GM12878 (cell line): ENCODE measurements at regions of chr7 and their contacts with region 1.

Region 1: DNA sequence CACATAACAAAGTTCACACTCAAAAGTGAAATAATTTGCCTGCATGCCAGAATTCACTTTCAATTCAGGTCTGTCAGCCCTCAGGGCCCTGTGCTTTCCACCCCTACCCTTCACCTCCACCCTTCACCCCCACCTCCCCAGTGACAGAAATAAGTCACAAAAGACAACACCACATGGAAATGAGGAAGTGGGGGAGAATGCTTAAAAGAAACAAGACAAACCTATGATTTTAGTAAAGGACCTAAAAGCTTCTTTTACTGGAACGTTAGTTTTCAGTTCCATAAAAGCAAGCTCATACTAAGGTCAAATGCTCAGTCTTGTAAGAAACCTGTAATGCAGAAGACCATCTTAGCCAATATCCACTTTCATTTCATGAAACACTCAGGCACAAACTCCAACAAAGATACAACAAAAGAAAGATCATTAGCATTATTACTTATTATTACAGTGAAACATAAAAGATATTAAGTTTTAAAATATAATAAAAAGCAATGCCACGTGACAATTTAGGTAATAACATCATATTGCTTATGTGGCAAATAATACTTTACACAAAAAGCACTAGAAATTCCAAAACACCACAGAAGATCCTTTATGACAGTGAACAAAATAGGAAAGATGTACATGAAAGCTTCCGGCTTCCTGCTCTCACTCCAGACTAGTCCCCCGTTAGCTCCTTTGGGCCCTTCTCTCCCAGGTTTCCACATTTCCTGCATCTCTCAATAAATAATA is 112.1 kb downstream of the LMBR1 start:
- DNase-seq: peak; percentile 86
- ATAC-seq: peak; percentile 96
- H3K4me3 ChIP-seq: 0 out of 2 replicates have a peak overlapping the region, but pooled peaks have one; percentile 16
- H3K27ac ChIP-seq: peak overlapping the region; percentile 85
- H3K4me1 ChIP-seq: peaks cover 33% of the 10 kb centered on the region
- H3K27me3 ChIP-seq: no peaks in the 10 kb centered on the region
- CTCF ChIP-seq: no peak
- EP300 ChIP-seq: peak; percentile 80; a peak in 2 of 4 replicates
- POLR2A ChIP-seq: no peak
- RAD21 ChIP-seq: peak; percentile 34; the same call in 1 of the 2 replicates

Region 2: GRCh38 chr7:156460858-156461627 is 319.8 kb before region 1 on chr7:
- CTCF ChIA-PET with region 1: no interaction called
- POLR2A ChIA-PET with region 1: no interaction called
- RAD21 ChIA-PET with region 1: no interaction called
- SMC1A ChIA-PET with region 1: no interaction called
- in situ Hi-C with region 1: no loop called
- intact Hi-C with region 1: no loop called
- DNase-seq: no peak
- ATAC-seq: no peak
- H3K4me3 ChIP-seq: no peak overlapping the region
- H3K27ac ChIP-seq: no peak overlapping the region
- H3K4me1 ChIP-seq: no peaks in the 10 kb centered on the region
- H3K27me3 ChIP-seq: no peaks in the 10 kb centered on the region; a peak in 2 of 4 replicates
- CTCF ChIP-seq: no peak
- EP300 ChIP-seq: no peak
- POLR2A ChIP-seq: no peak
- RAD21 ChIP-seq: no peak

Region 3: GRCh38 chr7:156747691-156748090 is 33.2 kb before region 1 on chr7:
- CTCF ChIA-PET with region 1: interaction called, 6 read pairs
- POLR2A ChIA-PET with region 1: interaction called, 3 read pairs
- RAD21 ChIA-PET with region 1: interaction called, 15 read pairs
- SMC1A ChIA-PET with region 1: interaction called, 29 read pairs
- in situ Hi-C with region 1: no loop called
- intact Hi-C with region 1: no loop called
- DNase-seq: no peak
- ATAC-seq: no peak
- H3K4me3 ChIP-seq: no peak overlapping the region
- H3K27ac ChIP-seq: no peak overlapping the region
- H3K4me1 ChIP-seq: no peaks in the 10 kb centered on the region; the same call in 1 of the 2 replicates
- H3K27me3 ChIP-seq: no peaks in the 10 kb centered on the region
- CTCF ChIP-seq: no peak
- EP300 ChIP-seq: no peak
- POLR2A ChIP-seq: no peak
- RAD21 ChIP-seq: no peak

Region 4: GRCh38 chr7:156768683-156769466 is 12.0 kb before region 1 on chr7:
- CTCF ChIA-PET with region 1: interaction called, 5 read pairs
- POLR2A ChIA-PET with region 1: interaction called, 3 read pairs
- RAD21 ChIA-PET with region 1: interaction called, 9 read pairs
- SMC1A ChIA-PET with region 1: interaction called, 56 read pairs
- in situ Hi-C with region 1: no loop called
- intact Hi-C with region 1: no loop called
- DNase-seq: no peak
- ATAC-seq: peak; percentile 42
- H3K4me3 ChIP-seq: no peak overlapping the region
- H3K27ac ChIP-seq: no peak overlapping the region
- H3K4me1 ChIP-seq: peaks cover 19% of the 10 kb centered on the region; the same call in 1 of the 2 replicates
- H3K27me3 ChIP-seq: no peaks in the 10 kb centered on the region
- CTCF ChIP-seq: no peak
- EP300 ChIP-seq: no peak
- POLR2A ChIP-seq: no peak
- RAD21 ChIP-seq: no peak

Region 5: DNA sequence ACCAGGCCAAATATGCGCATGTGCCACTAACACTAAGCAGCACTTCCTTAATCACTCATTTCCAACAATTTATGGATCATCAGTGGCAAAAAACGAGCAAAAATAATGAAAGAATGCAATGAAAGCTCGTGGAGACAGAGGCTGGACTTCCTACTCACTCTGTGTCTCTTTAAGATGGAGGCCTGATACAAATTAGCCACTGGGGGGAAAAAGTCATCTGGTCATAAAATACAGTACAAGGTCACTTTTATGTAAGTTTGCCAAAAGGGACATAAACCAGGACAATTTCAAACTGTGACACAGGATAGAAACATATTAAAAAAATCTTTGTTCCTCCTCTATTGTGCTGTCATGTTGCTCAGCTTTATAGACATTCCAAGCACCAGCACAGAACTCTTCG is 10.4 kb after region 1 on chr7:
- CTCF ChIA-PET with region 1: interaction called, 4 read pairs
- POLR2A ChIA-PET with region 1: interaction called, 3 read pairs
- RAD21 ChIA-PET with region 1: interaction called, 9 read pairs
- SMC1A ChIA-PET with region 1: interaction called, 16 read pairs
- in situ Hi-C with region 1: no loop called
- intact Hi-C with region 1: no loop called
- DNase-seq: no peak
- ATAC-seq: no peak
- H3K4me3 ChIP-seq: no peak overlapping the region
- H3K27ac ChIP-seq: no peak overlapping the region
- H3K4me1 ChIP-seq: no peaks in the 10 kb centered on the region
- H3K27me3 ChIP-seq: no peaks in the 10 kb centered on the region
- CTCF ChIP-seq: no peak
- EP300 ChIP-seq: no peak
- POLR2A ChIP-seq: no peak
- RAD21 ChIP-seq: no peak

Region 6: GRCh38 chr7:157193274-157193673 is 412.4 kb after region 1 on chr7:
- CTCF ChIA-PET with region 1: no interaction called
- POLR2A ChIA-PET with region 1: no interaction called
- RAD21 ChIA-PET with region 1: no interaction called
- SMC1A ChIA-PET with region 1: no interaction called
- in situ Hi-C with region 1: no loop called
- intact Hi-C with region 1: no loop called
- DNase-seq: no peak
- ATAC-seq: no peak
- H3K4me3 ChIP-seq: no peak overlapping the region
- H3K27ac ChIP-seq: no peak overlapping the region
- H3K4me1 ChIP-seq: no peaks in the 10 kb centered on the region
- H3K27me3 ChIP-seq: no peaks in the 10 kb centered on the region
- CTCF ChIP-seq: no peak
- EP300 ChIP-seq: no peak
- POLR2A ChIP-seq: no peak
- RAD21 ChIP-seq: no peak

Region 7: DNA sequence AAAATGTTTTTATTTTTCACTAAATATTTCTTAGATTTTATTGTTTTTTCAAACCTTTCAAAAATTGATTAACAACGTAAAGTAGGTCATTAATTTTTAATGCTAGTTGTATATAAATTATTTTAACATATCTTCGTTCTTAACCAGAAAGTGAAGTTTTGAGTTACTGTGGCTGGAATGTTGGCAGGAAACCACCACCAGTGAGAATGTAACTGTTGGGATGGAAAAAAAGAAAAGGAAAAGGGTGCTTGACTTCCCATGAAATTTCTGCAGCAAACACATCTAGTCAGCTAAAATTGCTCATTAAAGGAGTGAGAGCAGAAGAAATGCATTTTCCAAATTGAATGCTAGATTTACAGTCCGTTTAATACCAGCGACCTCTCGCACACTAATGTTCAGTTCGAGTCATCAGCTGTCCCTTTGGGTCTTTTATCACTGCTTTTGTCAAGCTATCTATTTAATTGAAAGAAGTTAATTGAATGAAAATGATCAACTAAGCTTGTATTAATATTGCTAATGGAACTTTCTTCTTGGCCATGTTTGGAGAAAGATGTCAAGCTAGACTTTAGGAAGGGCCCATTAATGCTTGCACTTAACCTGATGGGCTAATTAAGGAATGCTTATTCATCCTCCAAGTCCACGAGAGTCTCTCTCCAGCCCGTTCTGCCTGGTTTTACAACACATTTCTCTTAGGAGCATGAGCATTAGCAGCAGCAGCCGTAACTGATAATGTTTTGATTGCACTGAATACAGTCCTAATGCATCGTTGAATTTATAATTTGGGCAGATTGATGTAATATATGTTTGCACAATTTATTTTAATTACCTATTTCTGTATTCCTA is 427.9 kb after region 1 on chr7:
- CTCF ChIA-PET with region 1: no interaction called
- POLR2A ChIA-PET with region 1: no interaction called
- RAD21 ChIA-PET with region 1: no interaction called
- SMC1A ChIA-PET with region 1: no interaction called
- in situ Hi-C with region 1: no loop called
- intact Hi-C with region 1: no loop called
- DNase-seq: no peak
- ATAC-seq: no peak
- H3K4me3 ChIP-seq: no peak overlapping the region
- H3K27ac ChIP-seq: no peak overlapping the region
- H3K4me1 ChIP-seq: no peaks in the 10 kb centered on the region
- H3K27me3 ChIP-seq: no peaks in the 10 kb centered on the region
- CTCF ChIP-seq: no peak
- EP300 ChIP-seq: no peak
- POLR2A ChIP-seq: no peak
- RAD21 ChIP-seq: no peak